ENCODE measurements at regions of chr15 and their contacts with region 1.

Region 1: GRCh38 chr15:74438721-74439316 is 5.1 kb upstream of the SEMA7A start:
- DNase-seq: peak; percentile 83
- H3K4me3 ChIP-seq: no peak overlapping the region
- H3K27ac ChIP-seq: no peak overlapping the region
- H3K4me1 ChIP-seq: peaks cover 25% of the 10 kb centered on the region
- H3K27me3 ChIP-seq: no peaks in the 10 kb centered on the region
- CTCF ChIP-seq: peak; percentile 89 to 93 (median 93)
- POLR2A ChIP-seq: no peak

Region 2: GRCh38 chr15:74382004-74382816 is 56.6 kb before region 1 on chr15:
- intact Hi-C with region 1: loop called (anchors 5 kb)
- DNase-seq: peak; percentile 93
- H3K4me3 ChIP-seq: no peak overlapping the region
- H3K27ac ChIP-seq: no peak overlapping the region
- H3K4me1 ChIP-seq: peaks cover 25% of the 10 kb centered on the region
- H3K27me3 ChIP-seq: no peaks in the 10 kb centered on the region
- CTCF ChIP-seq: peak; percentile 93 to 99 (median 94)
- POLR2A ChIP-seq: no peak

Region 3: GRCh38 chr15:74519311-74519710 is 80.5 kb after region 1 on chr15:
- intact Hi-C with region 1: no loop called
- DNase-seq: no peak
- H3K4me3 ChIP-seq: no peak overlapping the region
- H3K27ac ChIP-seq: no peak overlapping the region
- H3K4me1 ChIP-seq: no peaks in the 10 kb centered on the region
- H3K27me3 ChIP-seq: no peaks in the 10 kb centered on the region
- CTCF ChIP-seq: no peak
- POLR2A ChIP-seq: no peak

Region 4: GRCh38 chr15:74610302-74610951 is 171.6 kb after region 1 on chr15:
- intact Hi-C with region 1: no loop called
- DNase-seq: peak; percentile 65
- H3K4me3 ChIP-seq: no peak overlapping the region
- H3K27ac ChIP-seq: no peak overlapping the region
- H3K4me1 ChIP-seq: peaks cover 22% of the 10 kb centered on the region
- H3K27me3 ChIP-seq: no peaks in the 10 kb centered on the region
- CTCF ChIP-seq: no peak
- POLR2A ChIP-seq: no peak

Measured in testis (tissue), 5 donors.